AG04450 (cell line): ENCODE measurements at regions of chr5 and their contacts with region 1.

Region 1: DNA sequence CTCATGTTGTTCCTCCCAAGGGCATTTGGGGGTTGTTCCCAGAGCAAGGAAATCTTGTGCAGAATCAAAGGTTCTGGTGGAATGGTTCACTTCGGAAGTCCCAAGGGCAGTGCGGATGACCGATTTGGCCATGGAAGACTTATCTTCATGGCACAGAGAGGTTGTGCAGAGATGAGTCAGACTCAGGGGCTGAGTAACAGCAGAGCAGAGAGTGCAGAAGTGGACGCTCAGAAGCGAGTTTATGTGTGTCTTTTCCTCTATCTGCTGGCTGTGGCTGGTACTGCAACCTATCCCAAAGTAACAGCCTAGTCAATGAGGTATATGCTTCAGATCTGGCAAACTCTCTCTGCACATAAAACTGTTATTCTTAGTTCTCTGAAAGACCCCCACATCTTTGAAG is 118.1 kb downstream of the DPYSL3 start:
- DNase-seq: peak; percentile 27
- H3K4me3 ChIP-seq: no peak overlapping the region
- H3K27ac ChIP-seq: no peak overlapping the region
- H3K27me3 ChIP-seq: no peaks in the 10 kb centered on the region
- CTCF ChIP-seq: peak; percentile 70

Region 2: DNA sequence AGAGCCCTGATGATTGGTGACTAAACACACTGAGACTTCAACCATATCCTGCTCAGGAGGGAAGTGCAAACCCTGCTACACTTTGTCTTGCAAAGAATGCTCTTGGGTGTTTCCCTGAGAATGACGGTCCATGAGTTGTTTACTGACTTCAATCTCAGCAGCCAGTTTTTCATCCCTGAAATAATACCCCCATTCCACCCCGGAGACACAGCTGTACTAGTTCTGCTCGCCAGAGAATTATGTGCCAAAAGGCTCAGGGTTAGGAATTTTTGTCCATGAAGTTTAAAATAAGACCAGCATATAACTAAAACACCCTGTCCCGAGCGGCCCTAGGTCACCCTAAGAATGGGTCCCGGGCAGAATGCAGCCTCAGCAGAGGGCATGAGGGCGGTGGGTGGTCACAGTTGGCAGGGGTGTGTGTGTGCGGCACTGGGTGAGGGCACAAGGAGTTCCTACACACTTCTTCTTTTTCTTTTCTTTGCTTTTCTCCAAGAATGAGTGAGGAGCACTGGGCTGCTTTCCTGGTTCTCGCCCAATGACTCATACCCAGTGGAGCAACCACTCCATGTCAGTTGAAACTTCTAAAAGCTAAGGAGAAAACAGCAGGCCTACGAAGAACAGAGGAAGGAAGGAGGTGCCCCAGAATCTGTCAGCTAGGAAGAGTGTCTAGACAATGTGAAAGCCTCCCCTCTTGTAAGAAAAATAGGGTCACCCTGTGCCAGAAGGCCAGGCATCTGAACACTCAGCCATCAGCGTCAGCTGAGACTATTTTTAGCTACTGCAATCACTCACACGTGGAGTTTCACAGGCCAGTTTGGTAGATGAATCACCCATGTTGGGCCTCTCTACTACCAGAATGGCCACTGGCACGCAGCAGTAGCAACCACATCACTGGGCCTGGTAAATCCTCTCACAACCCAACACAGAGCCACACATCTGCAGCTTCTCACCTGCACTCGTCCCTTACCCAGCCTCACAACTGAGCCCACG is 12.2 kb after region 1 on chr5:
- CTCF ChIA-PET with region 1: interaction called, 28 read pairs
- POLR2A ChIA-PET with region 1: no interaction called
- DNase-seq: peak; percentile 90
- H3K4me3 ChIP-seq: peak overlapping the region; percentile 43
- H3K27ac ChIP-seq: peak overlapping the region; percentile 98
- H3K27me3 ChIP-seq: no peaks in the 10 kb centered on the region
- CTCF ChIP-seq: no peak

Region 3: DNA sequence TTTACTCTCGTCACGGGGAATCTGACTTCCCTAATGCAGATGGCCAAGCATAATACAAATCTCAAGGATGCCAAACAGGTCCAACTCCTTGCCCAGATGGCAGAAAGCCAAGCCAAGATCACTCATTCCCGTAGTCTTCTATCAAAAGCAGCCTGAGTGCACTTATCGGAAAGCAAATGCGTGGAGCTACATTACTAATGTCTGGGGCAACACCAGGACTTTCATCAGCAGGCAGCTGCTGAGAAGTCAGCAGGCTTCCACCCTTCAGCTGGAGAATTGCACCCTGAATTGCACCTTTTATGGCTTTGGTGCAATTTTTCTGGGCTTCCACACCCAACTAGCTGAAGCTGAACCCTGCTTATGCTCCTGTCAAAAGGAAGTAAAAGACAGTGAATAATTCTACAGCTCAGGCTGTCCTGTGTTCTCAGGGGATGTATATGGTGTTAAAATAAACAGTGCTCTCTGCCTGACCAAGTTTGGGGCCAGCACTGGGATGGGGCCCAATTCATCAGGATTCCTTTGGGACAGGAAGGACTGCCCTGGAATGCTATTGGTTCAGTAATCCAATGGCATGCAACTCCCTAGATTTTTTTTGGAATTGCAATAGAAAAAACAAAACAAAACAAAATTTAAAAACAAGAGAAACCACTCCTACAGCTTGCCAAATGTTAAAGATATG is 25.5 kb after region 1 on chr5:
- CTCF ChIA-PET with region 1: interaction called, 10 read pairs
- POLR2A ChIA-PET with region 1: no interaction called
- DNase-seq: no peak
- H3K4me3 ChIP-seq: no peak overlapping the region
- H3K27ac ChIP-seq: peak overlapping the region; percentile 71
- H3K27me3 ChIP-seq: no peaks in the 10 kb centered on the region
- CTCF ChIP-seq: no peak